T-cell (primary cell): ENCODE measurements at regions of chr16 and their contacts with region 1.

Region 1: GRCh38 chr16:69581297-69581696 is 15.5 kb downstream of the NFAT5 start:
- DNase-seq: no peak
- ATAC-seq: no peak
- H3K4me3 ChIP-seq: no peak overlapping the region
- H3K4me3 Mint-ChIP-seq: no peak overlapping the region
- H3K27ac ChIP-seq: no peak overlapping the region
- H3K27ac Mint-ChIP-seq: no peak overlapping the region
- H3K4me1 ChIP-seq: peaks cover 2 to 3% of the 10 kb centered on the region in 2 experiments
- H3K4me1 Mint-ChIP-seq: peaks cover 32 to 44% (median 41%) of the 10 kb centered on the region in 3 donors
- H3K27me3 ChIP-seq: no peaks in the 10 kb centered on the region
- H3K27me3 Mint-ChIP-seq: no peaks in the 10 kb centered on the region

Region 2: GRCh38 chr16:69523566-69524305 is 57.6 kb before region 1 on chr16:
- CTCF ChIA-PET with region 1: no interaction called
- POLR2A ChIA-PET with region 1: interaction called in 1 of 2 experiments, 12 read pairs
- DNase-seq: no peak
- ATAC-seq: no peak
- H3K4me3 ChIP-seq: no peak overlapping the region
- H3K4me3 Mint-ChIP-seq: no peak overlapping the region
- H3K27ac ChIP-seq: no peak overlapping the region
- H3K27ac Mint-ChIP-seq: no peak overlapping the region
- H3K4me1 ChIP-seq: no peaks in the 10 kb centered on the region
- H3K4me1 Mint-ChIP-seq: peaks cover 0 to 7% (median 0%) of the 10 kb centered on the region in 3 donors
- H3K27me3 ChIP-seq: no peaks in the 10 kb centered on the region
- H3K27me3 Mint-ChIP-seq: no peaks in the 10 kb centered on the region